ENCODE measurements at regions of chr6 and their contacts with region 1.

Region 1: DNA sequence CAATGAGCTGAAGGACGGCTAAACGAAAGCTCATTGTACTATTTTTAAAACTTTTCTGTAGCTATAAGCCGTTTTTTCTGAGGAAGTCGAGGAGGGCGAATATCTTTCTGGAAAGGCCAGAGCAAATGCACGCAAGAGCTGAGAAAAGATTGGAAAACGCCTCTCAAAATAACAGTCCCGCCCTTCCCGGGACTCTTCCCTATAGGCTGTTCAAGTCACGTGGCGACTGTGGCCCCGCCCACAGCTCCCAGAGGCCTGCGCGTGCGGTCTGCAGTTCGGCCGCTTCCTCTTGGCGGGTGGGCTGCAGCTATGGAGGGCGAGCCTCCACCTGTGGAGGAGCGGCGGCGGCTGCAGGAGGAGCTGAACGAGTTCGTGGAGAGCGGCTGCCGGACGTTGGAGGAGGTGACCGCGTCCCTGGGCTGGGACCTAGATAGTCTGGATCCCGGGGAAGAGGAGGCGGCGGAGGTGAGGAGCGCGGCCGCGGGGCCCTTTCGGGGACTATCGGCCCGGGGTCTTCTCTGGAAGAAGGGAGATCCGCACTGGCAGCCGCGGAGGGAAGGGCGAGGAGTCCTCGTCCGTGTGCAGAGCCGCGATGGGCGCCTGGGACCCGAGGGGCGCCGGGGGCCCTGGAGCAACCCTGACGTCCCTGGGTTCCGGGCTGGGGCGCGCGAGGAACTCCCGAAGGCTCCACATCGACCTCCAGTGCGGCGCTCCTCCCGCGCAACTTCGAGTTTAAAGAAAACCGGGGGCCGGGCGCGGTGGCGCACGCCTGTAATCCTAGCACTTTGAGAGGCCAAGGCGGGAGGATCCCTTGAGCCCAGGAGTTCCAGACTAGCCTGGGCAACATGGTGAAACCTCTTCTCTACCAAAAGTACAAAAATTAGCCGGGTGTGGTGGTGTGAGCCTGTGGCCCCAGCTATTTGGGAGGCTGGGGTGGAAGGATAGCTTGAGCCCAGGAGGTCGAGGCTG is at the start of gene SNRNP48:
- DNase-seq: peak; percentile 94
- ATAC-seq: peak; percentile 100
- H3K4me3 Mint-ChIP-seq: peak within 1 kb of the TSS; percentile 96
- H3K27ac Mint-ChIP-seq: peak within 1 kb of the TSS; percentile 93
- H3K4me1 Mint-ChIP-seq: peaks cover 39% of the 10 kb centered on the region
- H3K27me3 Mint-ChIP-seq: no peaks in the 10 kb centered on the region
- total RNA-seq, gene SNRNP48: 19.4 to 20.9 TPM

Region 2: DNA sequence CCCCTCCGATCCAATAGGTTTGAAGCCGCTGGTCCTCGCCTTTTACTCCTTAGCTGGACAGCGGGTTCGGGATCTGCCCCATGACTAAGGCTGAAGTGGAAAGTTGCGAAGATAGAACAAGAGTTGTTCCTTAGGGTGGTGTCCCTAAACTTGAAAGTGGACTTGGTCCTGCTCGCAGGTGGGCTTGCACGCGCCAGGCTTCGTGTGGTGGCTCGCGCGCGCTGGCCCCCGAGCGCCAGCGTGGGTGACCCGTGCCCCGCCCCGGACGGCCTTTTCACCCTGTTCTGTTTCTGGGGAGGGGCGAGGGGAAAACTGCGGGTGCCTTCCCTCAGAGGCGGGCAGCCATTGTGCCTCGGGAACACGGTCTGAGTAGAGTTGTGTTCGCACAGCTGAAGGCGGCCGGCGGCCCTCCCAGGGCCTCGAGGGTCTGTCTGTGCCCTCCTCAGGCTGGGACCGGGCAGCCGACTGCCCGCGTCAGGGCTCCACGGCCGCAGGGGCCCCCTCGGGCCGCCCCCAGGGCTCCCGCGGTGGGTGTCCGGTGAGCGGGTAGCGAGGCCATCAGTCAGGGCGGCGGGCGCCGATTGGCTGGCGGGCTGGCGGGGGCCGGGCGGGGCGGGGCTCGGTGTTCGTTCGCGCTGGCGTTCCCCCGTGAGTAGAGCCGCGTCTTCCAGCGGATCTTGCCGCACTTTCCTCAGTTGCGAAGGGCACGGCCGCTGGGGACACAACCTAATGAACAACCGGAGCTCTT is 449.4 kb before region 1 on chr6:
- CTCF ChIA-PET with region 1: interaction called, 3 read pairs
- POLR2A ChIA-PET with region 1: no interaction called
- intact Hi-C with region 1: loop called in 1 of 2 experiments (anchors 10 kb)
- DNase-seq: peak; percentile 91
- ATAC-seq: peak; percentile 72
- H3K4me3 Mint-ChIP-seq: peak overlapping the region; percentile 72
- H3K27ac Mint-ChIP-seq: peak overlapping the region; percentile 85
- H3K4me1 Mint-ChIP-seq: peaks cover 82% of the 10 kb centered on the region
- H3K27me3 Mint-ChIP-seq: no peaks in the 10 kb centered on the region

Region 3: DNA sequence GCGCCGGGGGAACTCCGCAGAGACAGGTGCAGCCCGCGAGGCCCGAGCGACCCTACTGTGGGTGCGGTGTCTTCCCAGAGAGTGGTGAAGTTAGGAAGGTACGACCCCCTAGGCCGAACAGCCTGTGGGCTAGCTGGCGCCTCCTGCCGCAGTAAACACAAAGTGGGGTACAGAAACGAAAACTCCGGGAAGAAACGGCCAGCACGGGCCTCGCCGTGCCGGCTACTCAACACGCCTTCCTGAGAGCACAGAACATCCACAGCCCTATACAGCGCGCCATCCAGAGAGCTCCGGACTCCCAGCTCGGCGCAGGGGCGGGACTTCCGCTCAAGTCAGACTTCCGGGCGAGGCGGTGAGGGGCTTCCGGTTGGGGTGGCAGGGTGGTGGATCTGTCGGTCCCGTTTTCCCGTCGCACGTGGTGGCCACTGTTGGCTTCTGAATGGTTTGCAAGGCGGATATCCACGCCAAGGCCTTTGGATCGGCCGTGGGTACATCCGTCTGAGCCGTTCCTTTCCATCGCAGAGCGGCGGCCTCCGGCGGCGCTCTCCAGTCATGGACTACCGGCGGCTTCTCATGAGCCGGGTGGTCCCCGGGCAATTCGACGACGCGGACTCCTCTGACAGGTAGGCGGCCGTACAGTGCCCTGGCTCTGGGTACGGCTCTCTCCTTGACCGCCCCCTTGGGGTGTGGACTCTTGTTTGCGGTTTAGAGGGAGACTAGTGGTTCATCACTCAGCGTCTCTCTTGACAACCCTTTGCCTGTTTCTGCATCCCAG is 200.6 kb before region 1 on chr6 and contains the starts of genes CAGE1 and RIOK1:
- CTCF ChIA-PET with region 1: no interaction called
- POLR2A ChIA-PET with region 1: interaction called, 3 read pairs
- intact Hi-C with region 1: loop called (anchors 1 kb)
- DNase-seq: peak; percentile 97
- ATAC-seq: peak; percentile 96
- H3K4me3 Mint-ChIP-seq: peak within 1 kb of the TSS; percentile 88
- H3K27ac Mint-ChIP-seq: peak within 1 kb of the TSS; percentile 99
- H3K4me1 Mint-ChIP-seq: peaks cover 42% of the 10 kb centered on the region
- H3K27me3 Mint-ChIP-seq: no peaks in the 10 kb centered on the region
- total RNA-seq, gene CAGE1: 0.07 to 0.09 TPM
- total RNA-seq, gene RIOK1: 37.3 to 39.6 TPM

Region 4: GRCh38 chr6:7604506-7604905 is 14.3 kb after region 1 on chr6:
- CTCF ChIA-PET with region 1: interaction called, 7 read pairs
- POLR2A ChIA-PET with region 1: interaction called, 4 read pairs
- intact Hi-C with region 1: loop called in 1 of 2 experiments (anchors 1 kb)
- DNase-seq: no peak
- ATAC-seq: peak; percentile 94
- H3K4me3 Mint-ChIP-seq: no peak overlapping the region
- H3K27ac Mint-ChIP-seq: no peak overlapping the region
- H3K4me1 Mint-ChIP-seq: peaks cover 19% of the 10 kb centered on the region
- H3K27me3 Mint-ChIP-seq: no peaks in the 10 kb centered on the region

Region 5: GRCh38 chr6:8063761-8064637 is 473.8 kb after region 1 on chr6 and contains the start of gene BLOC1S5:
- CTCF ChIA-PET with region 1: no interaction called
- POLR2A ChIA-PET with region 1: no interaction called
- intact Hi-C with region 1: loop called in 1 of 2 experiments (anchors 1 kb)
- DNase-seq: peak; percentile 98
- ATAC-seq: peak; percentile 89
- H3K4me3 Mint-ChIP-seq: peak within 1 kb of the TSS; percentile 90
- H3K27ac Mint-ChIP-seq: peak within 1 kb of the TSS; percentile 94
- H3K4me1 Mint-ChIP-seq: peaks cover 29% of the 10 kb centered on the region
- H3K27me3 Mint-ChIP-seq: no peaks in the 10 kb centered on the region
- total RNA-seq, gene BLOC1S5: 20.0 to 30.3 TPM

Region 6: DNA sequence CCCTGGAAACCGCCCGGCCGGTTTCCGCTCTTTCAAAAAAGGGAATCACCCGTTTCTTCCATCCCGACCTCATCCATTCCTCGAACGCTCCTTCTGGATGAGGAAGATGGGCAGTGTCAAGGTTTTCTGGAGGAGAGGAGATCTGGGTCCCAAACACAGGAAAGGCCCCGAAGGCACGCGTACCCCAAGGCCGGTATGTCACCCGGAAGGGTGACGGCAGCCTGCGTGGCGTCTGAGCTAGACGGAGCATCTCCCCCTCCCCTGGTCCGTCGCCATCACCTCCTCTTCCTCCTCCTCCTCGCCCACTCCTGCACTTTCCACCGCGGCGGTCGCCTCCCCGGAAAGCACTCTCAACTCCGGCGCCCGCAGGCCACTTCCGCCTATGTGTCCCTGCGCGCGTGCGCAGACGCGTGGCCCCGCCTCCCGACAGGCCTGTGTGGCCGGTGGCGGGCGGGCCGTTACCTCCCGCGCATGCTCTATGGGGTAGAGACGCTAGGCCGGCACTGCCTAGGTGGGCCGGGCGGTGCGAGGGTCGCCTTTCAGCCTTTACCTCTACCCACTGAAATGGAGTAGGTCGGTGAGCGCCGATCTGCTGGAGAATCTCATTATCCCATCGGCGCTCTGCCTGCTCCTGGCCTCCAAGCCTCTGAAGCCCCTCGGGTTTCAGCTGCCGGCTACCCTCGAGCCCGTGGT is 845.1 kb after region 1 on chr6 and contains the start of gene SLC35B3:
- CTCF ChIA-PET with region 1: no interaction called
- POLR2A ChIA-PET with region 1: no interaction called
- intact Hi-C with region 1: loop called in 1 of 2 experiments (anchors 10 kb)
- DNase-seq: peak; percentile 99
- ATAC-seq: peak; percentile 95
- H3K4me3 Mint-ChIP-seq: peak within 1 kb of the TSS; percentile 92
- H3K27ac Mint-ChIP-seq: peak within 1 kb of the TSS; percentile 95
- H3K4me1 Mint-ChIP-seq: peaks cover 38% of the 10 kb centered on the region
- H3K27me3 Mint-ChIP-seq: no peaks in the 10 kb centered on the region
- total RNA-seq, gene SLC35B3: 4.9 to 6.7 TPM

Measured in activated CD4-positive, alpha-beta T cell treated with anti-CD3 and anti-CD28 coated beads for 36 hours (primary cell).